Heart left ventricle (tissue), 16 donors: ENCODE measurements at regions of chr11 and their contacts with region 1.

Region 1: DNA sequence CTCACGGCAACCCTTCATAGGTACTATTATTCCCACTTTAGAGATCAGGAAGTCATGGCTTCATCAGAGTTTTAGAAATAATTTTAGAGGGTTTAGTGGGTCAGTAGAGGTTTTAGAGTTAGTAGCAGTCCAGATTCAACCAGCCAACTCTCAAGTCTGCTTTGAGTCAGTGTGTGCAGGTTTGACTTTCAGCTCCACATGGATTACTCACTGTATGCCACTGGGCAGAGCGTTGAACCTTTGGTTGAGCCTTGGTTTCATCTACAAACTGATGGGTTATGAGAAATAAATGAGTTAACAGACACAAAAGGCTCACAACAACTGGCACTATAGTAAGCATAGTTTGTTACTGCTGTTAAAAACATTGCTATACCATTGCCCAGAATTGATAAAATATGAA is 19.0 kb upstream of the TP53AIP1 start:
- DNase-seq: no peak
- ATAC-seq: no peak
- H3K4me3 ChIP-seq: no peak overlapping the region
- H3K27ac ChIP-seq: no peak overlapping the region
- H3K4me1 ChIP-seq: peaks cover 0 to 13% (median 0%) of the 10 kb centered on the region in 12 donors
- H3K27me3 ChIP-seq: peaks cover 0 to 8% (median 0%) of the 10 kb centered on the region in 9 donors
- CTCF ChIP-seq: no peak
- POLR2A ChIP-seq: no peak

Region 2: DNA sequence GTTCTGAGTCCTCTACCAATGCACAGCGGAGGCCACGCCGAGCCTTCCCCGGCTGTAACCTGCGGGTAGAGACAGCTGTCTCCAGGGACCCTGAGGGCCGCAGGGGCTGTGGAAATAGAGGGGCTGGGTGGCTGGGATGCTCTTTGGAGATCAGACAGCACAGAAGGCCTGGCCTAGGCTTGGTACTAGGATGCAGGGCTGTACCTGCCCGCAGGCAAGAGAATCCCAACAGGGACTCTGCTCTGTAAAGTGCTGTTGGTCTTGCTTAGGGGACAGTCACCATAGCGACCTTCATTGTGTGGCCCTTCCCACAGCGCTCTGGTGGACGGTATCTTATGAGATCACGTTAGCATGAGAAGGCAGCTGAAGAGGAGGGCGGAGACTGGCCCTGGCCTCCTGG is 81.8 kb before region 1 on chr11:
- intact Hi-C with region 1: loop called in 8 of 10 experiments (anchors 1 to 2 kb)
- DNase-seq: no peak
- ATAC-seq: no peak
- H3K4me3 ChIP-seq: no peak overlapping the region
- H3K27ac ChIP-seq: no peak overlapping the region
- H3K4me1 ChIP-seq: no peaks in the 10 kb centered on the region
- H3K27me3 ChIP-seq: peaks cover 0 to 18% (median 0%) of the 10 kb centered on the region in 9 donors
- CTCF ChIP-seq: no peak
- POLR2A ChIP-seq: no peak